Transverse colon (tissue), 4 donors: ENCODE measurements at regions of chr2 and their contacts with region 1.

Region 1: GRCh38 chr2:64534363-64534762 is 10.2 kb downstream of the AFTPH start:
- DNase-seq: no peak
- H3K4me3 ChIP-seq: no peak overlapping the region
- H3K27ac ChIP-seq: no peak overlapping the region
- H3K4me1 ChIP-seq: peaks cover 0 to 14% (median 2%) of the 10 kb centered on the region in 4 donors
- H3K27me3 ChIP-seq: no peaks in the 10 kb centered on the region
- CTCF ChIP-seq: no peak
- EP300 ChIP-seq: no peak
- POLR2A ChIP-seq: no peak

Region 2: DNA sequence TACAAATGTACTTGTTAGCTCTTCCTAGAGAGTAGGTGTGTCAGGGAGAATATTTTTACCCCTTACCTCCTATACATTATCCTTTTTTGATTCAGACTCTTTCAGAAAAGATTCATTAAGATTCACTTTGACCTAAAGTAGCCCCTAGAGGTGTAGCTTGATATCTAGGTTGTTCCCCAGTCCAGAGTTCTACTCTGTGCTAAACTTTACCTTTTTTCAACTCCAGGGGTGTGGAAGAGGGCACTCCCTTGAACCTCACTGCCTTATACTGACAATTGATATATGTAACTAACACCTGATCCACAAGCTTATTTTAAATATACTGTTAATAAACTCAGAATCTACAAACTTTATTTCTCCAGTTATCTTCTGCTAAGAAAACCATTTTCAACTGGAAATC is 19.8 kb after region 1 on chr2:
- in situ Hi-C with region 1: no loop called
- intact Hi-C with region 1: loop called (anchors 1 kb)
- DNase-seq: no peak
- H3K4me3 ChIP-seq: no peak overlapping the region
- H3K27ac ChIP-seq: no peak overlapping the region
- H3K4me1 ChIP-seq: peaks cover 0 to 7% (median 0%) of the 10 kb centered on the region in 4 donors
- H3K27me3 ChIP-seq: no peaks in the 10 kb centered on the region
- CTCF ChIP-seq: no peak
- EP300 ChIP-seq: no peak
- POLR2A ChIP-seq: no peak

Region 3: DNA sequence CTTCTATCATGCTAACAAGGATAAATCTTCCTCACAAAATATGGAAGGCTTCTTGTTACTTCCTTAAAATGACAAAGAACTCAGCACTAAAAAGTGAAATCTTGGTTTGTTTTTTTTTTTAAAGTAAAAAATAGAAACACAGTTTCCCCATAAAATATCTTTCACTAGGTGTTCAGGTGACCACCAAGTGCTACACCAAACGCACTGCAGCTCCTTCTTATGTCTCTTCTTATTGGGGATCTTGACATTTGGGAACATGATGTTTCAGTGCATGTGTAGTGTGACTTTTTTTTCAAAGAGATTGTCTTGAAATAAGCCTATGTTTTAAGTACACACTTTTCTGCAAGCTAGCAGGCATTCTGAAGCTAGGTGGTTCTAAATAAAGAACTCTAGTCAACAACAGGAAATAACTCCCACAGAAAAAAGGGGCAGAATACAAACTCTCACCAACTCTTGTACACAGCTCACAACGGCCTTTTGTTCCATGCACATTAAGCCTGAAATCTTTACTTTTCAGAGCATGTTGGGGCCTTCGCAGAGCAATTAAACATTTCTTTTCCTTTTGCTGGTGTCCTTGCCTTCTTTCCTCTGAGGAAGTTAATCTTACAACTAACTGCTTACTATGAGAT is 132.6 kb after region 1 on chr2:
- in situ Hi-C with region 1: no loop called
- intact Hi-C with region 1: no loop called
- DNase-seq: no peak
- H3K4me3 ChIP-seq: no peak overlapping the region
- H3K27ac ChIP-seq: peak overlapping the region in 2 of 4 donors; percentile 24 to 27
- H3K4me1 ChIP-seq: peaks cover 0 to 5% (median 0%) of the 10 kb centered on the region in 4 donors
- H3K27me3 ChIP-seq: no peaks in the 10 kb centered on the region
- CTCF ChIP-seq: no peak
- EP300 ChIP-seq: no peak
- POLR2A ChIP-seq: no peak

Region 4: DNA sequence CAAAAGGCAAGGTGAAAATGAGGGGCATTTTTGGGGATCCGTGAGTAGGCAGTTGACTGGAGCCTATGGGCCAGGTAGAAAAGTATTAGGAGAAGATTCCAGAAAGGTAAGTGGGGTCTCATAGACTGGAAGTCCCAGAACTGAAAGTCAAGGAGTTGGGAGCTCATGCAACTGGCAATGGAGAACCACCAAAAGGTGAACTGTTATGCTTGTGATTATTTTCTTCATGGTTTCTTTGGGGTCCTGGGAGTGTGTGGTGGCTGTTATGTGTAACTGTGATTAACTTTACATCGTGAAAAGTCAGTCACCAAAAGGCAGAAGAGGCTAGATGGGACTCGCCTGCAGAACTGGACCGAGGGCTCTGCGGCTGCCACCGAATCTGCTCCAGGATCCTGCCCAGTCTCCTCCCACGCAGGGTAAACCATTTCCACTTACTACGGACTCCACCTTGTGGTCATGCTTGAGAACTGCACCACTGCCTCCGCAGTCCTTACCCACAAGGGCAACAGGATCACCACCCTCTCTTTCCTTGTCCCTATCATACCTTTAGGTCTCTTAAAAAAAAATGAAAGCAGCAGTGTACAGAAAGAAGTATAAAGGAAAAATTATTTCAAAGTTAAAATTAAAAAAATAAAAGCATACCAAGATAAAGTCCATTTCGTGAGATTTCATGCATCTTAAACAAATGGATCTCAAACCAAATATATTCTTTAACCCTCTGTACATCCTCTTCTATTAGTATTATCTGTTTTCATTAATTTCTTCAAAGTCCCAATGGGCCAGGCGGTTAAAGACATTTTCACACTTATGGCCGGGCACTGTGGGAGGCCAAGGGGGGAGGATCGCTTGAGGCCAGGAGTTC is 506.3 kb after region 1 on chr2:
- in situ Hi-C with region 1: no loop called
- intact Hi-C with region 1: no loop called
- DNase-seq: peak; percentile 90
- H3K4me3 ChIP-seq: no peak overlapping the region
- H3K27ac ChIP-seq: no peak overlapping the region
- H3K4me1 ChIP-seq: peaks cover 0 to 14% (median 2%) of the 10 kb centered on the region in 4 donors
- H3K27me3 ChIP-seq: no peaks in the 10 kb centered on the region
- CTCF ChIP-seq: peak; percentile 95 to 98 (median 98)
- EP300 ChIP-seq: no peak
- POLR2A ChIP-seq: no peak